ENCODE measurements at regions of chr4 and their contacts with region 1.

Region 1: DNA sequence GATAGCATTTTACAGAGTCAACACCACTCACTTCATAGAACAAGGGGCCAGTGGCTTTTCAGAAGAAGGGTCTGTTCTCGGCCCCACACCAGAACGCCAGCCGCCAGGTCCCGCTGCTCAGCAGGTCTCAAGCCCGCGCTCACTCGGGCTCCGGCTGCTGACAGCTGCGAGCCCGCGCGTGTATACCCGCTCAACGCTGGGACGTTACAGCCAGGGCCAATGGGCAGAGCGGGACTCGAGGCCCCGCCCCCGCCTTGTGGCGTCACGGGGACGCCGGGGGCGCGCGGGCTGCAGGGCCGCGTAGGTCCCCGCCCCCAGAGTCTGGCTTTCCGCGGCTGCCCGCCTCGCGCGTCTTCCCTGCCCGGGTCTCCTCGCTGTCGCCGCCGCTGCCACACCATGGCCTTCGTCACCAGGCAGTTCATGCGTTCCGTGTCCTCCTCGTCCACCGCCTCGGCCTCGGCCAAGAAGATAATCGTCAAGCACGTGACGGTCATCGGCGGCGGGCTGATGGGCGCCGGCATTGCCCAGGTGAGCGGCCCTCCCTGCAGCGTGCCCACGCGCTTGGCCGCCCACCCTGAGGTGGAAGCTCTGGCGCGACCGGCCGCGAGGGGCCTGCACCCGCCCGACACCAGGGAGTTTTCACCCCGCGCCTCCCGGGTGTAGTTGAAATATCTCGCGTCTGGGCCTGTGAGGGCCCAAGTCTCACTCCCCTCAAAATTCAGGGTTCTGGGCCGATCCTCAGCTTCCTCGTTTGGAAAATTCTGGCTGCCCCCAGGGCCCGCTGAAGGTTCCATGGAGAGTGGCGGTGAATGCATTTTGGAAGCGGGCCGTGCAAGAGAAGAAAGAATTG is at the start of gene HADH:
- DNase-seq: peak; percentile 92 to 95 (median 95)
- H3K4me3 ChIP-seq: peak within 1 kb of the TSS; percentile 49 to 75
- H3K4me3 Mint-ChIP-seq: peak within 1 kb of the TSS; percentile 90 to 99 (median 97)
- H3K27ac ChIP-seq: peak within 1 kb of the TSS; percentile 80
- H3K27ac Mint-ChIP-seq: peak within 1 kb of the TSS; percentile 87 to 98 (median 96)
- H3K4me1 ChIP-seq: peaks cover 39% of the 10 kb centered on the region
- H3K4me1 Mint-ChIP-seq: peaks cover 30 to 53% (median 42%) of the 10 kb centered on the region in 4 donors
- H3K27me3 ChIP-seq: no peaks in the 10 kb centered on the region
- H3K27me3 Mint-ChIP-seq: no peaks in the 10 kb centered on the region
- total RNA-seq, gene HADH: 20.0 to 23.0 TPM

Region 2: GRCh38 chr4:106315968-106316772 is 1673.6 kb before region 1 on chr4 and contains the starts of genes AIMP1 and TBCK:
- CTCF ChIA-PET with region 1: no interaction called
- POLR2A ChIA-PET with region 1: no interaction called
- intact Hi-C with region 1: loop called (anchors 10 kb)
- DNase-seq: peak; percentile 90 to 93 (median 92)
- H3K4me3 ChIP-seq: peak within 1 kb of the TSS; percentile 91 to 94
- H3K4me3 Mint-ChIP-seq: no peak within 1 kb of the TSS
- H3K27ac ChIP-seq: peak within 1 kb of the TSS; percentile 96
- H3K27ac Mint-ChIP-seq: no peak within 1 kb of the TSS
- H3K4me1 ChIP-seq: peaks cover 41% of the 10 kb centered on the region
- H3K4me1 Mint-ChIP-seq: peaks cover 22 to 44% (median 23%) of the 10 kb centered on the region in 4 donors
- H3K27me3 ChIP-seq: no peaks in the 10 kb centered on the region
- H3K27me3 Mint-ChIP-seq: no peaks in the 10 kb centered on the region
- total RNA-seq, gene AIMP1: 47.0 to 51.9 TPM
- total RNA-seq, gene TBCK: 61.3 to 62.3 TPM

Region 3: GRCh38 chr4:107838861-107839565 is 150.7 kb before region 1 on chr4:
- CTCF ChIA-PET with region 1: no interaction called
- POLR2A ChIA-PET with region 1: no interaction called
- intact Hi-C with region 1: no loop called
- DNase-seq: no peak
- H3K4me3 ChIP-seq: no peak overlapping the region
- H3K4me3 Mint-ChIP-seq: no peak overlapping the region
- H3K27ac ChIP-seq: no peak overlapping the region
- H3K27ac Mint-ChIP-seq: no peak overlapping the region
- H3K4me1 ChIP-seq: no peaks in the 10 kb centered on the region
- H3K4me1 Mint-ChIP-seq: no peaks in the 10 kb centered on the region
- H3K27me3 ChIP-seq: no peaks in the 10 kb centered on the region
- H3K27me3 Mint-ChIP-seq: peaks cover 3 to 8% of the 10 kb centered on the region in 2 donors

Region 4: GRCh38 chr4:107930821-107931774 is 58.7 kb before region 1 on chr4 and contains the start of gene CYP2U1:
- CTCF ChIA-PET with region 1: no interaction called
- POLR2A ChIA-PET with region 1: interaction called, 10 read pairs
- intact Hi-C with region 1: loop called (anchors 1 kb)
- DNase-seq: peak; percentile 80 to 85 (median 81)
- H3K4me3 ChIP-seq: peak within 1 kb of the TSS; percentile 63 to 81
- H3K4me3 Mint-ChIP-seq: peak within 1 kb of the TSS; percentile 92 to 97 (median 92)
- H3K27ac ChIP-seq: peak within 1 kb of the TSS; percentile 52
- H3K27ac Mint-ChIP-seq: peak within 1 kb of the TSS; percentile 54 to 97 (median 93)
- H3K4me1 ChIP-seq: peaks cover 18% of the 10 kb centered on the region
- H3K4me1 Mint-ChIP-seq: peaks cover 16 to 38% (median 28%) of the 10 kb centered on the region in 4 donors
- H3K27me3 ChIP-seq: no peaks in the 10 kb centered on the region
- H3K27me3 Mint-ChIP-seq: no peaks in the 10 kb centered on the region
- total RNA-seq, gene CYP2U1: 6.3 to 7.2 TPM

Region 5: GRCh38 chr4:109729718-109730618 is 1740.2 kb after region 1 on chr4 and contains the start of gene PLA2G12A:
- CTCF ChIA-PET with region 1: no interaction called
- POLR2A ChIA-PET with region 1: no interaction called
- intact Hi-C with region 1: loop called (anchors 10 kb)
- DNase-seq: peak; percentile 78 to 90 (median 87)
- H3K4me3 ChIP-seq: peak within 1 kb of the TSS; percentile 58 to 94
- H3K4me3 Mint-ChIP-seq: peak within 1 kb of the TSS; percentile 89 to 93 (median 91)
- H3K27ac ChIP-seq: peak within 1 kb of the TSS; percentile 72
- H3K27ac Mint-ChIP-seq: peak within 1 kb of the TSS; percentile 73 to 94 (median 90)
- H3K4me1 ChIP-seq: peaks cover 18% of the 10 kb centered on the region
- H3K4me1 Mint-ChIP-seq: peaks cover 18 to 32% (median 21%) of the 10 kb centered on the region in 4 donors
- H3K27me3 ChIP-seq: no peaks in the 10 kb centered on the region
- H3K27me3 Mint-ChIP-seq: peaks cover 0 to 1% of the 10 kb centered on the region in 2 donors
- total RNA-seq, gene PLA2G12A: 15.7 to 18.1 TPM